Activated T-helper 2 cell treated with anti-CD3 and anti-CD28 coated beads, Interferon-gamma antibody, Interleukin-2, Interleukin-4, amounts not matched to agents 10 μg/mL and 5 μg/mL and 100 μg/mL, durations not matched to agents 14 hours and 24 hours and 36 hours (primary cell): ENCODE measurements at regions of chr3 and their contacts with region 1.

Region 1: DNA sequence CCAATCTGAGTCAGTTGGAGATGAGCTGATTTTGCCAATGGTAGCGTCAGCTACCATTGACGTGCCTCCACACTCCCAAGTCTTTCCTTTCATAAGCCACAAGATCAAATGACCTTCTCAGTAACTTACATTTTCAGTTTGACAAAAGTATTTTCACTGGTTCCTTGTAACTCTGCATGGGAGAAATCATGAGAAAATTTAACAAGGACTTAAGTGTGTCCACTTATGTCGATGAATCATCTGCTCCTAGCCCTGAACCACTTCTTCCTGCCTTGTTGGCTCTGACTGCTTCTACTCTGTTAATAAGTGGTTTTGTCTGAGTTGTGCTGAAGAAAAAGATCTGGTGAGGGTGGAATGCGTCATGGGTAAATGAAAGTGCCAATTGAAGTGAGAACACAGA is 101.2 kb downstream of the NFKBIZ start:
- DNase-seq: no peak
- H3K4me3 Mint-ChIP-seq: no peak overlapping the region
- H3K27ac Mint-ChIP-seq: peak overlapping the region; percentile 53
- H3K4me1 Mint-ChIP-seq: peaks cover 26% of the 10 kb centered on the region
- H3K27me3 Mint-ChIP-seq: no peaks in the 10 kb centered on the region

Region 2: DNA sequence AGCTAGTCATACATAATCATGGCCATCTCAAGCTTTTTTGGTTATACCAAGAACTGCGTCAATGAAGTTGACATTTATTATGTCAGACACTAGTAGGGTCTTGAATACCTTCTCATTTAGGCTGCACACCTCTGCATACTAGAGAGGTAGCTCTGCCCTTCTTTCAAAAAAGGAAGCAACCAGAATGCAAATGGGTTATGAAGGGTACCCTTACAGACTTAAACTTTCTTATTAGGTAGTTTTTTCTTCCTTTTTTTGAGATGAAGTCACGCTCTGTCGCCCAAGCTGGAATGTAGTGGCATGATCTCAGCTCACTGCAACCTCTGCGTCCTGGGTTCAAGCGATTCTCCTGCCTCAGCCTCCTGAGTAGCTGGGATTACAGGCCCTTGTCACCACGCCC is 373.2 kb before region 1 on chr3:
- intact Hi-C with region 1: no loop called
- DNase-seq: no peak
- H3K4me3 Mint-ChIP-seq: no peak overlapping the region
- H3K27ac Mint-ChIP-seq: no peak overlapping the region
- H3K4me1 Mint-ChIP-seq: peaks cover 40% of the 10 kb centered on the region
- H3K27me3 Mint-ChIP-seq: no peaks in the 10 kb centered on the region

Region 3: DNA sequence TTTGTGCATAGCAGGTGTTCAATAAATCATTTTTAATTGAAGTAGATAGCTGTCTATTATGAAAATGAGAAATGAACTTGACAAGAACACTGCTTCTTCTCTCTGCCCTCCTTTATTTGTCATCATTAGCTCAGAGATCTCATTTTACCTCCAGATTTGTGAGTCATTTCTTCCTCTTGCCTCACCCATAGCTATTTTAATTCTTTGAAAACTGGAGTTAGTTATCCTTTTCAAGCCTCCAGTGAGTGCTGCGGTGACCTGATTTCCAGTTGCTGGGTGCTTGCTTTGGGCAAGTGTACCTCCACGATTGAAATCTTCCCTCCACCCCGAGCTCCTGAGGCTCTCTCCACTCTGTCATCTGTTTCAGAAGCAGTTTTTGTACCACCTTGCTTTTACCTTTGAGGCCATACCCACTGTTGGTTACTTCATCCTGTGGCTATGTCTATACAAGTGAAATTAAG is 13.4 kb after region 1 on chr3:
- intact Hi-C with region 1: loop called (anchors 2 kb)
- DNase-seq: no peak
- H3K4me3 Mint-ChIP-seq: no peak overlapping the region
- H3K27ac Mint-ChIP-seq: peak overlapping the region; percentile 1
- H3K4me1 Mint-ChIP-seq: peaks cover 27% of the 10 kb centered on the region
- H3K27me3 Mint-ChIP-seq: peaks cover 1% of the 10 kb centered on the region

Region 4: DNA sequence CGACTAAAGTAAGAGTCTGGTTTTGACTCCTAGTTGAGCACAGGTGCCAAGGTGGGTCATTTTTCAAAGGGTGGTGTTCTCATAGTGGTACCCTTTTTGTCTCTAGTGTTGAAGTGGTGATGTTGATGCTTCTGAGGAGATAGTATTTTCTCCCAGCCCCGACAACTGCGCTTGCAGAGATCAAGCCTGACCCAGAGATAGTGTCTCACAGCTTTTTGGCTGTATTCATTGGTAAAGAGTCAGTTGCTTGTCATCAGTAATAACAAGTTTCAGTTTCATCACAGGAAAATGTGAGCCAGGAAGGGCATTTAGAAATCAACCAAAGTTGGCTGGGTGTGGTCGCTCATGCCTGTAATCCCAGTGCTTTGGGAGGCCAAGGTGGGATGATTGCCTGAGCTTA is 38.1 kb after region 1 on chr3:
- intact Hi-C with region 1: loop called (anchors 1 kb)
- DNase-seq: peak; percentile 15
- H3K4me3 Mint-ChIP-seq: no peak overlapping the region
- H3K27ac Mint-ChIP-seq: peak overlapping the region; percentile 92
- H3K4me1 Mint-ChIP-seq: peaks cover 62% of the 10 kb centered on the region
- H3K27me3 Mint-ChIP-seq: peaks cover 13% of the 10 kb centered on the region